ENCODE measurements at regions of chr11 and their contacts with region 1.

Region 1: DNA sequence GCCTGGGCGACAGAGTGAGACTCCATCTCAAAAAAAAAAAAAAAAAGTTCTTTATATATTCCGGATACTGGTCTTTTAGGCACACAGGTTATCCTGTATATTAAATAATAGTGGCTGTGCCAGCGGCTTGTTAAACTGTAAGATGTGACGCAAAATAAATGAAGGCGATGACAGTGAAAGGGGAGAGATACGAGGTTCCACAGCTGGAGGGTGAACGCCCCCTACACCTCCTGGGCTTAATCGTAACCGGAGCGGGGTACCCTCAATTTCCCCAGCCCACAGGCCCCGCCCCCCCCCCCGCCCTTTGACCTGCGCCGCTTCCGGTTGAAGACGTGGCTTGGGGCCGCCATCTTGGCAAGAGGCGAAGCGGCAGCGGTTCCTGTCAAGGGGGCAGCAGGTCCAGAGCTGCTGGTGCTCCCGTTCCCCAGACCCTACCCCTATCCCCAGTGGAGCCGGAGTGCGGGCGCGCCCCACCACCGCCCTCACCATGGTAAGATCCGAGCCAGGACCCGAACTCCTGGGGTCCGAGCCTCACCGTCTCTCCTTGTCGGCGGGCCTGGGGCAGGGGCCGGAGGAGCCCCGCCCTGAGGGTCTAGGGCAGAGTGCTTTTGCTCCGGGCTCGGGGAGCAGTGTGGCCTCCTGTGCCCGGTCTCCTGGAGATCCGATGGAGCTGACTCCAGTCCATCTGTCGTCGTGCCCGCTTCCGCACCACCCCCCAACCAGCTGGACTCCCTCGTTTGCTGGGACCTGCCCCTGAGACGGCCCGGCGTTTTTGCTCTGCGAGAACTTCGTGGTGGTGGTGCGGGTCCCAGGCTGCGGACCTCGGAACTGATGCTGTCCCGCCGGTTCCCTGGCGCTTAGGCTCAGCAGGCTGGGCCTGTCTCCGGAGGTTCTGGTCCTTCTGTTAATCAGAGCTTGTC is at the start of gene ARCN1:
- DNase-seq: peak; percentile 88
- ATAC-seq: peak; percentile 80
- H3K4me3 Mint-ChIP-seq: peak within 1 kb of the TSS; percentile 89
- H3K27ac Mint-ChIP-seq: peak within 1 kb of the TSS; percentile 96
- H3K4me1 Mint-ChIP-seq: peaks cover 44% of the 10 kb centered on the region
- H3K27me3 Mint-ChIP-seq: no peaks in the 10 kb centered on the region
- total RNA-seq, gene ARCN1: 148 to 154 TPM

Region 2: GRCh38 chr11:118002541-118003423 is 569.5 kb before region 1 on chr11:
- CTCF ChIA-PET with region 1: no interaction called
- POLR2A ChIA-PET with region 1: no interaction called
- intact Hi-C with region 1: loop called in 1 of 2 experiments (anchors 5 kb)
- DNase-seq: peak; percentile 85
- ATAC-seq: peak; percentile 67
- H3K4me3 Mint-ChIP-seq: peak overlapping the region; percentile 38
- H3K27ac Mint-ChIP-seq: peak overlapping the region; percentile 97
- H3K4me1 Mint-ChIP-seq: peaks cover 94% of the 10 kb centered on the region
- H3K27me3 Mint-ChIP-seq: no peaks in the 10 kb centered on the region

Region 3: GRCh38 chr11:118338637-118339061 is 233.7 kb before region 1 on chr11:
- CTCF ChIA-PET with region 1: no interaction called
- POLR2A ChIA-PET with region 1: no interaction called
- intact Hi-C with region 1: loop called in 1 of 2 experiments (anchors 1 kb)
- DNase-seq: peak; percentile 94
- ATAC-seq: peak; percentile 63
- H3K4me3 Mint-ChIP-seq: peak overlapping the region; percentile 83
- H3K27ac Mint-ChIP-seq: peak overlapping the region; percentile 100
- H3K4me1 Mint-ChIP-seq: peaks cover 45% of the 10 kb centered on the region
- H3K27me3 Mint-ChIP-seq: no peaks in the 10 kb centered on the region

Region 4: DNA sequence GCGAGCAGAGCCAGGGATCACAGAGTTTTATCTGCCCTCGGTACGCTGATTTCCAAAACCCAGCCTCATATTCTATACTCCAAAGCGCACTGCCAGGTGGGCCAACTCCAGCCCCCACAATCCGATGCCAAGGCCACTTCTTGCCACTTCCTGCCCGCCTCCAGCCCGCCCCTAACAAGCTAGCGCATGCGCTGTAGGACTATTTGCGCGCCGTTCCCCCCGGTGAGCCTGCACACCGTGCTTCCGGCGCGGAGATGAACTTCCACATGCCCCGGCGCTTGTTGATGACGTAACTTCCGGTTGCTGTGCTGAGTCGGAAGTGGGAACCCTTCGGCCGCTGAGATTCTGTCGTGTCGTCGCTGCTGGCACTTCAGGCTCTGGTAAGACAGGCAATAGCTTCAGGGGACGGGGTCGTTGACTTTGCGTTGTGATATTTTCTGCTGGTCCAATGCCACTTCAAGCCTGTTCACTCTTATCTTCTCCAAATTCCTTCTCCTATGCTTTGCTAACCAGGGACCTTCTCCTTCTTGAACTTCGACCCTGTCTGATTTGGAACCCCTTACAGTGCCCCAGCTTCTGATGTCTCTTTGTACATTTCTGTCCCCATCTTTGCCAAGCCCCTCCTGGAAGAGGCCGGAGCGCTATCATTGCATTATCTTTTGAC is 212.9 kb before region 1 on chr11 and contains the start of gene UBE4A:
- CTCF ChIA-PET with region 1: no interaction called
- POLR2A ChIA-PET with region 1: no interaction called
- intact Hi-C with region 1: loop called in 1 of 2 experiments (anchors 2 kb)
- DNase-seq: peak; percentile 99
- ATAC-seq: peak; percentile 96
- H3K4me3 Mint-ChIP-seq: peak within 1 kb of the TSS; percentile 100
- H3K27ac Mint-ChIP-seq: peak within 1 kb of the TSS; percentile 97
- H3K4me1 Mint-ChIP-seq: peaks cover 43% of the 10 kb centered on the region
- H3K27me3 Mint-ChIP-seq: no peaks in the 10 kb centered on the region
- total RNA-seq, gene UBE4A: 44.2 to 50.7 TPM

Region 5: GRCh38 chr11:118530408-118531339 is 41.6 kb before region 1 on chr11 and contains the start of gene TMEM25:
- CTCF ChIA-PET with region 1: no interaction called
- POLR2A ChIA-PET with region 1: no interaction called
- intact Hi-C with region 1: loop called (anchors 2 to 5 kb)
- DNase-seq: peak; percentile 87
- ATAC-seq: peak; percentile 90
- H3K4me3 Mint-ChIP-seq: peak within 1 kb of the TSS; percentile 82
- H3K27ac Mint-ChIP-seq: peak within 1 kb of the TSS; percentile 75
- H3K4me1 Mint-ChIP-seq: peaks cover 27% of the 10 kb centered on the region
- H3K27me3 Mint-ChIP-seq: no peaks in the 10 kb centered on the region
- total RNA-seq, gene TMEM25: 12.2 to 17.4 TPM

Region 6: GRCh38 chr11:118610804-118611795 is 38.8 kb after region 1 on chr11:
- CTCF ChIA-PET with region 1: interaction called, 4 read pairs
- POLR2A ChIA-PET with region 1: interaction called, 3 read pairs
- intact Hi-C with region 1: loop called (anchors 2 to 5 kb)
- DNase-seq: peak; percentile 93
- ATAC-seq: peak; percentile 70
- H3K4me3 Mint-ChIP-seq: peak overlapping the region; percentile 72
- H3K27ac Mint-ChIP-seq: no peak overlapping the region
- H3K4me1 Mint-ChIP-seq: peaks cover 21% of the 10 kb centered on the region
- H3K27me3 Mint-ChIP-seq: peaks cover 14% of the 10 kb centered on the region

Region 7: DNA sequence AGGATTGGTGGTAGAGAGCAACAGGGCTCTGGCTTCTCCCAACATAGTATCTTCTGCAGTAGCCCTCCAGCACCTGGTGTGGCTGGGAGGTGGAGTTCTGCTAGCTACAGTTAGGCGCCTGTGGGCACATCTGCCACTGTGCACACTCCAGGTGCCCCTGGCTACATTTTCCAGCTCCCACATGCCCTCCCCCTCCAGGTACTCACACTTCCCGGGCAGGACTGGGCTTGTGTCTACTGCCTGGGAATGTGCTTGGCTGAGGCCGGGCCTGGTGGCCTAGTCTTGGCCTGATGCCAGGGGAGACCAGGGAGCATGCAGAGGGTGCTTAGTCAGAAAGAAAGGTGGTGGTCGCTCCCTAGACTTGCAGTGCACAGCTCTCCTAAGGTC is 50.9 kb after region 1 on chr11:
- CTCF ChIA-PET with region 1: no interaction called
- POLR2A ChIA-PET with region 1: no interaction called
- intact Hi-C with region 1: no loop called
- DNase-seq: no peak
- ATAC-seq: no peak
- H3K4me3 Mint-ChIP-seq: no peak overlapping the region
- H3K27ac Mint-ChIP-seq: no peak overlapping the region
- H3K4me1 Mint-ChIP-seq: peaks cover 12% of the 10 kb centered on the region
- H3K27me3 Mint-ChIP-seq: peaks cover 8% of the 10 kb centered on the region

Region 8: DNA sequence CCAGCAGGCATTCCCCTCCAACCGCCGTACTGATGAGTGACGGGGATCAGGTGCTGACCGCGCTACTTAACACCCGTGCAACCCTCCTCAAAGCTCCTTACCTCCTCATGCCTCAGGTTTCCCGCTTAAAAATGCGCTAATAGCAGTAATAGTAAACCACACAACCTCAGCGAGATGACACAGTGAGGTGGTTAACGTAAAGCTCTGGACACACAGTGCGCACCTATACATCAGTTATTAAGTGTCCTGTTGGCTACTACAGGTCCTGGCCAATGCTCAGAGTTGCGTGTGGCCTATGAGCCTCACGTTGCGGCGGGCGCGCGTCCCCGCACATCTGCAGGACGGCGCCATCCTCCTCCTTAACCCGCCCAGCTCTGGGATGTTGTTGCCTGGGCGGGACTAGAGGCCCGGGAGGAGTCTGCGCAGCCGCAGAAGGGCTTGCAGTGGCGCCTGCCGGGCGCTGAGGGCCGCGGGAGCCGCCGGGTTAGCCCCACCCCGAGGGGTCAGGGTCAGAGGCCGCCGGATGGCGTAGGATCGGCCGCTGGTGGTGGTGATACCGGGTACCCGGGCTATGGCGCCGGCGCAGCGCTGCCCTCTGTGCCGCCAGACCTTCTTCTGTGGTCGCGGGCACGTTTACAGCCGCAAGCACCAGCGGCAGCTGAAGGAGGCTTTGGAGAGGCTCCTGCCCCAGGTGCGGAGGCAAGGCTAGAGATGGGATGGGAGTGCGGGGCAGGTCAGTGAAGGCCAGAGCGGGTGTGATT is 425.5 kb after region 1 on chr11 and contains the start of gene CENATAC:
- CTCF ChIA-PET with region 1: no interaction called
- POLR2A ChIA-PET with region 1: no interaction called
- intact Hi-C with region 1: loop called in 1 of 2 experiments (anchors 5 kb)
- DNase-seq: peak; percentile 98
- ATAC-seq: peak; percentile 93
- H3K4me3 Mint-ChIP-seq: peak within 1 kb of the TSS; percentile 88
- H3K27ac Mint-ChIP-seq: peak within 1 kb of the TSS; percentile 98
- H3K4me1 Mint-ChIP-seq: peaks cover 32% of the 10 kb centered on the region
- H3K27me3 Mint-ChIP-seq: no peaks in the 10 kb centered on the region
- total RNA-seq, gene CENATAC: 23.7 to 26.2 TPM

Measured in activated CD4-positive, alpha-beta T cell treated with anti-CD3 and anti-CD28 coated beads for 36 hours (primary cell).